ENCODE measurements at regions of chr17 and their contacts with region 1.

Region 1: DNA sequence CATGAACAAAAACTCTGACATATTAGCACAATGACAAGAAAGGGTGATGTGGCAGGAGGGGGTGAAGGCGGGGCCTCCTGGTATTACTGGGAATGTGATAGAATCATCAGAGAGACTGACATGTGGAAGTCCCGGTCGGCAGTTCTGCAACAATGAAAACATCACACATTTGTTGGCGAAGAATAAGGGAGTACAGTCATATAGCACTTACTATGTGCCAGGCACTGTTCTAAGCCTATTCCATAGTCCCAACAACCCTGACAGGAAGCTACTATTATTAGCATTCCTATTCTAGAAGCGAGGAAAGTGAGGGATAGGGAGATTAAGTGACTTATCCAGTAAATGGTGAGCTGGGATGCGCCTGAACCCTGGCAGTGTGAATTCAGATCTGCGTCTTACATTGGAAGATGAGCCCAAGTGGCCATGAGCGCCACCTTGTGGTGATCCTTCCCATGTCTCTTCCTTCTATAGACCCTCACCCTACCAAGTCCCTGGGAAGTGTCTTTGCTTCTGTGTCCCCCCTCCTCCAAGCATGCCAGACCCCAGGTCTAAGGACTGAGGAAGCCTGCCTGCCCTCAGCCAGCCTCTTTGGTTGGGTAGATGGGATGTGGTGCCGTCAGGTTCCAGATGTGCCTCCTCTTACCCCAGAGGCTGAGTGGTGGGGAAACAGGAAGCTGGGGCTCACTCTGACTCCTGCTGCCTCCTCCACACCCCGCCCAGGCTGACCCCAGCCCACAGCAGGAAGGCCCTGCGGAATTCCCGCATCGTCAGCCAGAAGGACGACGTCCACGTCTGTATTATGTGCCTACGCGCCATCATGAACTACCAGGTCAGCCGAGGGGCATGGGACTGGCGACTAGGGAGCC is 14.0 kb downstream of the FMNL1 start:
- DNase-seq: peak; percentile 62 to 90 (median 83)
- ATAC-seq: peak; percentile 62
- H3K4me3 ChIP-seq: no peak overlapping the region
- H3K4me3 Mint-ChIP-seq: no peak overlapping the region
- H3K27ac ChIP-seq: peak overlapping the region in 1 of 2 experiments; percentile 60
- H3K27ac Mint-ChIP-seq: peak overlapping the region; percentile 66
- H3K4me1 ChIP-seq: peaks cover 45% of the 10 kb centered on the region
- H3K4me1 Mint-ChIP-seq: peaks cover 51% of the 10 kb centered on the region
- H3K27me3 ChIP-seq: no peaks in the 10 kb centered on the region
- H3K27me3 Mint-ChIP-seq: no peaks in the 10 kb centered on the region
- CTCF ChIP-seq: peak; percentile 71

Region 2: DNA sequence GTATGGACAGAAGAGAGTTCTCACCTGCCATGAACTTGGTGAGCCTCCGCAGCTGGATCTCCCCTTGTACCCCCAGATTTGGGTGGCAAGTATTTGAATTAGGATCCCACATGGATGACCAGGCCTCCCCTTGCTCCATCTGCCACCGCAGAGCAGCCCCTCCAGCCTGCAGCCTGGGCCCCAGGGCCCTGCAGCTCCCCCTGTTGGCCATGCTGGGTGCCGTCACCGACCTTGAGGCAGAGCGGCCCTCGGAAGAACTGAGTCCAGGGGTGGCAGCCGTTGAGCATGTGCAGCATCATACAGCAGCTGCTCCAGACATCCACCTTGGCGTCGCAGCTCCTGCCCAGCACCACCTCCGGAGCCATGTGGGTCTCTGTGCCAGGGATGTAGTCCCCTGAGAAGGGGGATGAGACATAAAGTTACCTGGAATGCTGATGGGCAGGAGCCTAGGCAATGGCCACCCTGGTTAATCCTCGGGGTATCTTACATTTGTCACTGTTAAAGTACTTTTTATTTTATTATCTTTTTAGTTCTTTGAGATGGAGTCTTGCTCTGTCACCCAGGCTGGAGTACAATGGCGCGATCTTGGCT is 35.3 kb after region 1 on chr17:
- CTCF ChIA-PET with region 1: interaction called, 37 read pairs
- POLR2A ChIA-PET with region 1: no interaction called
- intact Hi-C with region 1: loop called (anchors 1 to 2 kb)
- DNase-seq: peak; percentile 21 to 75 (median 58)
- ATAC-seq: peak; percentile 95
- H3K4me3 ChIP-seq: no peak overlapping the region
- H3K4me3 Mint-ChIP-seq: no peak overlapping the region
- H3K27ac ChIP-seq: no peak overlapping the region
- H3K27ac Mint-ChIP-seq: peak overlapping the region; percentile 27
- H3K4me1 ChIP-seq: no peaks in the 10 kb centered on the region
- H3K4me1 Mint-ChIP-seq: peaks cover 6% of the 10 kb centered on the region
- H3K27me3 ChIP-seq: no peaks in the 10 kb centered on the region
- H3K27me3 Mint-ChIP-seq: no peaks in the 10 kb centered on the region
- CTCF ChIP-seq: peak; percentile 84

Region 3: DNA sequence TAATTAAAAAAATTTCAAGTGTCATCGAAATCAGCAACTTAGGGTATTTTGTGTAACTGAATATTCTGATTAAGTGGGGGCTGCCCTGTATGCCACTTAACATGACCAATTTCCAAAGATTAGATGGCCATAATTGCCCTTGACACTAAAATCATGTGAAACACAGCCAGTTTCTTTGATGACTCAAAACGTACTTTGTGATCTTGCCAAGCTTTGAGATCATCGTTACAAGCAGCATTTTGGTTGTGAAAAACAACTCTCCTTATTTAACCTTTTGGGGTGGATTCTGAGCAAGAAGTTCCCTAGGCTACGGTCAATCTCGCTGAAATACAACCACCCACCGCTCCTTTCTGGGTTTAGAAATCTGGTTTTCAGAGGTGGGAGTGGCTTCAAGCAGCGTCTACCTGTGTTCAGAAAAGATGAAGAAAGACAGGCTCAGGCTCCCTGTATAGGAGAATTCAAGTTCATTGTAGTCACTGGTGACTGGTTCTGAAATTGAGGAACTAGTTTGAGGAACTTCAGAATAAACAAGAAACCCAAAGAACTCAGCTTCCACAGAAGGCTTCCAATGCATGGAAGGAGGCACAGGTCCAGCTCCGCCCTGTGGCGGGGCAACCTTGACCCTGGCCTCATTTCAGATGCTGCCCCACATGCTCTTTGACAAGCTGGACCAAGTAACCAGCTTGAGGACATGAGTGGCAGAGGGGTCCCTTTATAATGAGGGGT is 71.8 kb after region 1 on chr17:
- CTCF ChIA-PET with region 1: interaction called, 17 read pairs
- POLR2A ChIA-PET with region 1: no interaction called
- intact Hi-C with region 1: no loop called
- DNase-seq: peak in 4 of 9 experiments; percentile 36 to 65 (median 42)
- ATAC-seq: peak; percentile 55
- H3K4me3 ChIP-seq: no peak overlapping the region
- H3K4me3 Mint-ChIP-seq: peak overlapping the region; percentile 42
- H3K27ac ChIP-seq: peak overlapping the region; percentile 32 to 33
- H3K27ac Mint-ChIP-seq: peak overlapping the region; percentile 81
- H3K4me1 ChIP-seq: peaks cover 62% of the 10 kb centered on the region
- H3K4me1 Mint-ChIP-seq: peaks cover 77% of the 10 kb centered on the region
- H3K27me3 ChIP-seq: no peaks in the 10 kb centered on the region
- H3K27me3 Mint-ChIP-seq: no peaks in the 10 kb centered on the region
- CTCF ChIP-seq: no peak

Region 4: GRCh38 chr17:45325810-45326209 is 90.2 kb after region 1 on chr17:
- CTCF ChIA-PET with region 1: no interaction called
- POLR2A ChIA-PET with region 1: no interaction called
- intact Hi-C with region 1: no loop called
- DNase-seq: no peak
- ATAC-seq: no peak
- H3K4me3 ChIP-seq: no peak overlapping the region
- H3K4me3 Mint-ChIP-seq: no peak overlapping the region
- H3K27ac ChIP-seq: no peak overlapping the region
- H3K27ac Mint-ChIP-seq: no peak overlapping the region
- H3K4me1 ChIP-seq: peaks cover 14% of the 10 kb centered on the region
- H3K4me1 Mint-ChIP-seq: peaks cover 20% of the 10 kb centered on the region
- H3K27me3 ChIP-seq: no peaks in the 10 kb centered on the region
- H3K27me3 Mint-ChIP-seq: no peaks in the 10 kb centered on the region
- CTCF ChIP-seq: no peak

Region 5: GRCh38 chr17:45410144-45411091 is 174.8 kb after region 1 on chr17:
- CTCF ChIA-PET with region 1: no interaction called
- POLR2A ChIA-PET with region 1: no interaction called
- intact Hi-C with region 1: no loop called
- DNase-seq: peak in 8 of 9 experiments; percentile 52 to 81 (median 64)
- ATAC-seq: peak; percentile 86
- H3K4me3 ChIP-seq: peak overlapping the region; percentile 100
- H3K4me3 Mint-ChIP-seq: peak overlapping the region; percentile 99
- H3K27ac ChIP-seq: peak overlapping the region; percentile 85 to 94
- H3K27ac Mint-ChIP-seq: peak overlapping the region; percentile 99
- H3K4me1 ChIP-seq: peaks cover 42% of the 10 kb centered on the region
- H3K4me1 Mint-ChIP-seq: peaks cover 48% of the 10 kb centered on the region
- H3K27me3 ChIP-seq: no peaks in the 10 kb centered on the region
- H3K27me3 Mint-ChIP-seq: no peaks in the 10 kb centered on the region
- CTCF ChIP-seq: no peak

Measured in CD8-positive, alpha-beta T cell (primary cell).